Naive thymus-derived CD4-positive, alpha-beta T cell (primary cell): ENCODE measurements at regions of chr3 and their contacts with region 1.

Region 1: GRCh38 chr3:111610189-111610588 is 15.0 kb upstream of the ZBED2 start:
- DNase-seq: peak in 7 of 9 donors; percentile 79 to 91 (median 89)
- ATAC-seq: peak; percentile 94
- H3K4me3 ChIP-seq: peak overlapping the region; percentile 2
- H3K4me3 Mint-ChIP-seq: peak overlapping the region; percentile 48 to 84 (median 74)
- H3K27ac ChIP-seq: peak overlapping the region; percentile 47
- H3K27ac Mint-ChIP-seq: peak overlapping the region; percentile 41 to 96 (median 90)
- H3K4me1 ChIP-seq: peaks cover 27 to 38% of the 10 kb centered on the region in 2 donors
- H3K4me1 Mint-ChIP-seq: peaks cover 32 to 90% (median 61%) of the 10 kb centered on the region in 7 donors
- H3K27me3 ChIP-seq: no peaks in the 10 kb centered on the region
- H3K27me3 Mint-ChIP-seq: no peaks in the 10 kb centered on the region

Region 2: DNA sequence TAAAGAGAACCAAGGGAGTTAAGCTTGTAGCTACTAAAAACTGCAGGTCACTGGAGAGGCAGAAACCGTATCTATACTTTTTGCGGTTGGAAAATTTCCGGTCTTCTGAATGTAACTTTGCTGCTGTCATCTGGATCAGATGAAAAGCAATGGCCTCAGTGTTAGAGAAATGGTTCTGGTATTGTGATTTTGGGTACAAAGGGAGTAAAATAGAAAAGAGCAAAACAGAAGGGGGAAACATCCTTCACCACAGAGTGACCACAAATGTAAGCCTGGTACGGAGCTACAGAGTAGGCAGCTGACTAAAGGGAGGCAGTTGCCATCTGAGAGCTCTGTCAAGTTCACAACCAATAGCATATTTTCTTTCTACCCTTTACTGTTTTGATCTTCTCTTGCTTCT is 62.6 kb before region 1 on chr3:
- CTCF ChIA-PET with region 1: interaction called, 3 read pairs
- POLR2A ChIA-PET with region 1: interaction called, 5 read pairs
- intact Hi-C with region 1: loop called (anchors 1 kb)
- DNase-seq: peak in 8 of 9 donors; percentile 44 to 88 (median 82)
- ATAC-seq: peak; percentile 89
- H3K4me3 ChIP-seq: peak overlapping the region; percentile 48
- H3K4me3 Mint-ChIP-seq: no peak overlapping the region
- H3K27ac ChIP-seq: peak overlapping the region; percentile 94
- H3K27ac Mint-ChIP-seq: no peak overlapping the region
- H3K4me1 ChIP-seq: peaks cover 66 to 81% of the 10 kb centered on the region in 2 donors
- H3K4me1 Mint-ChIP-seq: peaks cover 0 to 34% (median 4%) of the 10 kb centered on the region in 7 donors
- H3K27me3 ChIP-seq: no peaks in the 10 kb centered on the region
- H3K27me3 Mint-ChIP-seq: no peaks in the 10 kb centered on the region

Region 3: DNA sequence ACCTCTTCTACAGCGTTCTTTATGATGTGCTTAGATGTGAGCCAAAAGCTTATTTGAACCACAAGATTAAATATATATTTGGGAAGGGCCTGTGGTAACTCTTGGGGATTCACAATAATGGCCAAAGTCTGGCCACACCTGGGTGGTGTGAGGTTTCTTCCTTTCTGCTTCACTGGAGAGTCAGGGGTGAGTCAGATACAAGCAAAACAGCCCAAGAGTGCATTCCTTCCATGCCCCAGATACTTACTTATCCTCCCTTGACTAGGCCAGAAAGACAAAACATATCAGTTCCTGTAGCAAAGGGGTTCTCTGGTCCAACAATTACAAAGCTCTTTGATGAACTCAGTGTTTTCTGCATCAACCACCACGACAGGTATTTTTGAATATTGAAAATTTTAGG is 16.0 kb before region 1 on chr3:
- CTCF ChIA-PET with region 1: no interaction called
- POLR2A ChIA-PET with region 1: interaction called, 3 read pairs
- intact Hi-C with region 1: loop called (anchors 1 to 2 kb)
- DNase-seq: no peak
- ATAC-seq: no peak
- H3K4me3 ChIP-seq: no peak overlapping the region
- H3K4me3 Mint-ChIP-seq: peak overlapping the region in 1 of 10 donors; percentile 83
- H3K27ac ChIP-seq: no peak overlapping the region
- H3K27ac Mint-ChIP-seq: peak overlapping the region in 8 of 9 donors; percentile 3 to 91 (median 20)
- H3K4me1 ChIP-seq: peaks cover 0 to 21% of the 10 kb centered on the region in 2 donors
- H3K4me1 Mint-ChIP-seq: peaks cover 11 to 84% (median 24%) of the 10 kb centered on the region in 7 donors
- H3K27me3 ChIP-seq: no peaks in the 10 kb centered on the region
- H3K27me3 Mint-ChIP-seq: no peaks in the 10 kb centered on the region

Region 4: DNA sequence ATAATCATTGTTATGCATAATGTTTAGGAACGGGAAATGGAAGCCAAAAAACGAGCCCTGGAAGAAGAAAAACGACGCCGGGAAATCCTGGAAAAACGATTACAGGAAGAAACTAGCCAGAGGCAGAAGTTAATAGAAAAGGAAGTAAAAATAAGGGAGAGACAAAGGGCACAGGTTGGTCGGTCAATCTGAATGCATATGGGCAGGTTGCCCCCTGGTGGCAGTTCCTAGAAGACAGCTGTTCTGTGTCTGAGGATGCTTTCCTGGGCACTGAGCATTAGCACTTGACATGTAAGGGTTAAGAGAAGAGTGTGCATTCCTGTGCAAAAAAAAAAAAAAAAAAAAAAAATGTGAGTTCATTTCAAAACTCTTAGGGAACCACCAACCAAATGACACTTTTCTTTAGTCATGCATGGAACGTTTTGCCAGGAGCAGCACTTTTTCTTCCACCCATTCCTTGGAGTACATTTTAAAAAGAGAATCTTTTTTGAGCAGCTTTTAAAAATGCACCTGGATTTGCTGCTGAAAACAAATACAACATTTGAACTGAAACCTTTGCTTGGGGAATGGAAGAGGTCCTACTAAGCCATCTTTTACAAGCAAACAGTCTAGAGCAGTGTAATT is 357.6 kb after region 1 on chr3:
- CTCF ChIA-PET with region 1: no interaction called
- POLR2A ChIA-PET with region 1: no interaction called
- intact Hi-C with region 1: loop called in 1 of 2 experiments (anchors 1 kb)
- DNase-seq: peak; percentile 44 to 72 (median 64)
- ATAC-seq: peak; percentile 96
- H3K4me3 ChIP-seq: no peak overlapping the region
- H3K4me3 Mint-ChIP-seq: peak overlapping the region in 2 of 10 donors; percentile 12 to 44
- H3K27ac ChIP-seq: no peak overlapping the region
- H3K27ac Mint-ChIP-seq: peak overlapping the region in 1 of 9 donors; percentile 71
- H3K4me1 ChIP-seq: peaks cover 0 to 4% of the 10 kb centered on the region in 2 donors
- H3K4me1 Mint-ChIP-seq: peaks cover 3 to 13% (median 5%) of the 10 kb centered on the region in 7 donors
- H3K27me3 ChIP-seq: no peaks in the 10 kb centered on the region
- H3K27me3 Mint-ChIP-seq: no peaks in the 10 kb centered on the region

Region 5: DNA sequence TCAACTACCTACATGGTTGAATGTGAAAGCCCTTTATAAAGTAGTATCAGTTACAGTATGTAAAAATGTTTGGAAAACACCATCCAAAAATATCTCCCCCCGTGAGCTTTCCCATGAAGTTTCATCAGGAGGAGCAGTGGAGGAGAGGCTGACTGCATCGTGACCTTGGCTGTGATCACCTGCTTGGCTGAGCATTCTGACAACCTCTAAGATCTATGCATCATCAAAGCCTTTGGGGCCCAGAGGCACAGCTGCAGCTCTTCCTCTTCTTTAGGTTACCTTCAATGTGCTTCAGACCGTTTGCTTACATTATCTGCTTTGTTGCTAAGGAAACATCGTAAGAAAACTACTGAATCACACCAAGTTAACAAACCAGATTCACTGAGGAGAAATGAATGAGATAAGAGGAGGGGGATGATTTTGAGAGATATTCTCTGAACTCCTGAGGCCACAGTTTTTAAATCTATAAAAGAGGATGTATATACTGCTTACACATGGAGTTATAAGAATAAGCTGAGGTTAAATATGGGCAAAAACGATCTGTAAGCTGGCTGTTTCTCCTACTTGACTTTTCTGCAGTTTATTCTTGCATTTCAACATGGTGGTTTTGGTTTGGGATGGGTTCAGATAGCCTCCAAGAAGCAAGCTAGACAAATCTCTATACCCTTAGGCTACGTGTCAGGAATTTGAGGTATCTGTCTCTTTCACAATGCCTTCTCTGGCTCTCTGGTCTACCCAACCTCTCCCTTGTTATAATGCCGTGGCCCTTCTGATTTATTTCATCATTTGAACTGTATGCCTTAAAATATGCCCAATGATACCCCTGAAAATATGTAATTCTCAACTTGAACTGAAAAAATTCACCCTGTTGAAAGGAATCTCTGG is 518.9 kb after region 1 on chr3:
- CTCF ChIA-PET with region 1: no interaction called
- POLR2A ChIA-PET with region 1: no interaction called
- intact Hi-C with region 1: loop called in 1 of 2 experiments (anchors 2 kb)
- DNase-seq: peak in 8 of 9 donors; percentile 39 to 88 (median 83)
- ATAC-seq: peak; percentile 82
- H3K4me3 ChIP-seq: no peak overlapping the region
- H3K4me3 Mint-ChIP-seq: peak overlapping the region; percentile 23 to 100 (median 64)
- H3K27ac ChIP-seq: peak overlapping the region; percentile 82
- H3K27ac Mint-ChIP-seq: peak overlapping the region; percentile 87 to 95 (median 93)
- H3K4me1 ChIP-seq: peaks cover 41 to 72% of the 10 kb centered on the region in 2 donors
- H3K4me1 Mint-ChIP-seq: peaks cover 49 to 92% (median 90%) of the 10 kb centered on the region in 7 donors
- H3K27me3 ChIP-seq: no peaks in the 10 kb centered on the region
- H3K27me3 Mint-ChIP-seq: no peaks in the 10 kb centered on the region